ENCODE measurements at regions of chr5 and their contacts with region 1.

Region 1: DNA sequence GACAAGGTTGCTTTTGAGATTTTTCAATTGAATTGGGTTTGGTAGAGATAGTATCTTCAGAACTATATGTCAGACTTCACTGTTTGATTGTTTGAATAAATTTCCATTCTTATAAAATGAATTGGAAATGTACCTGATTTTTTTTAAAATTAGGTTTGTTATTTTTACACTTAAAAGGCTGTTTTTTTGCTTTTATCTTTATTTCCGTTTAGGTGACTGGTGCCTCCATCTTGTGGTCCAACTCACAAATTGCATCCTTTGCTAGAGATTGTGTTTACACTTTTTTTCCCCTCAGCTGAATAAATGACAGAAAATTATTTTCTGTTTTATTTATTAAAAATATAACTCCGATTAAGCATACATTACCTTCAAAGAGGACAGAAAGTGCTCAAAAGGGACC is 15.6 kb downstream of the NDUFAF2 start:
- DNase-seq: peak; percentile 64
- H3K4me3 ChIP-seq: no peak overlapping the region
- H3K27ac ChIP-seq: no peak overlapping the region
- H3K4me1 ChIP-seq: peaks cover 6% of the 10 kb centered on the region
- H3K27me3 ChIP-seq: no peaks in the 10 kb centered on the region

Region 2: DNA sequence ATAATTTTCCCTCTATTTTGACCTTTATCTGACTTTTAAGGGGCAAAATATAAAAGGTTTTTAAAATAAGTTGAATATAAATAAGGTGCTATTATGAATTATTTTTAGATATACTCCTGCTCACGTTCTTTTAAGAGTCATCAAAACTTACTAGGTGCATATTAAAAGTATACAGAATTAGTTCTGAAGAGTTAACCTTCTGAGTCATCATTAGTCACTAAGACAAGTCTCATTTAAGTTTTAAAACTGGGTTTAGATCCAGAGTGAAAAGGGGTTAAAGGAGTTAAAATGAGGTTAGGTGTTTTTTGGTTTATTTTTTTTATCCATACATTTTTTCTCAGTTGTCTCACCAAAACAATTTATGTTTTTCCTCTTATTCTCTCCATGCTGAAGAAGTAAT is 159.9 kb after region 1 on chr5:
- in situ Hi-C with region 1: no loop called
- DNase-seq: peak; percentile 36
- H3K4me3 ChIP-seq: no peak overlapping the region
- H3K27ac ChIP-seq: no peak overlapping the region
- H3K4me1 ChIP-seq: peaks cover 9% of the 10 kb centered on the region; the same call in 1 of the 2 replicates
- H3K27me3 ChIP-seq: no peaks in the 10 kb centered on the region

Region 3: GRCh38 chr5:61182449-61182848 is 221.9 kb after region 1 on chr5:
- in situ Hi-C with region 1: no loop called
- DNase-seq: no peak
- H3K4me3 ChIP-seq: no peak overlapping the region
- H3K27ac ChIP-seq: no peak overlapping the region
- H3K4me1 ChIP-seq: peaks cover 13% of the 10 kb centered on the region; the same call in 1 of the 2 replicates
- H3K27me3 ChIP-seq: no peaks in the 10 kb centered on the region

Region 4: GRCh38 chr5:61658592-61659008 is 698.0 kb after region 1 on chr5:
- in situ Hi-C with region 1: loop called (anchors 25 kb)
- DNase-seq: peak; percentile 77
- H3K4me3 ChIP-seq: no peak overlapping the region
- H3K27ac ChIP-seq: no peak overlapping the region
- H3K4me1 ChIP-seq: no peaks in the 10 kb centered on the region
- H3K27me3 ChIP-seq: peaks cover 12% of the 10 kb centered on the region; the same call in 1 of the 2 replicates

Region 5: GRCh38 chr5:61933787-61934626 is 973.4 kb after region 1 on chr5:
- in situ Hi-C with region 1: loop called (anchors 25 kb)
- DNase-seq: peak; percentile 59
- H3K4me3 ChIP-seq: no peak overlapping the region
- H3K27ac ChIP-seq: no peak overlapping the region
- H3K4me1 ChIP-seq: no peaks in the 10 kb centered on the region
- H3K27me3 ChIP-seq: no peaks in the 10 kb centered on the region; the same call in none of the 2 replicates

Region 6: GRCh38 chr5:62143268-62144229 is 1183.0 kb after region 1 on chr5:
- in situ Hi-C with region 1: loop called (anchors 25 kb)
- DNase-seq: peak; percentile 60
- H3K4me3 ChIP-seq: peak overlapping the region; percentile 38; the same call in 1 of the 2 replicates
- H3K27ac ChIP-seq: no peak overlapping the region
- H3K4me1 ChIP-seq: no peaks in the 10 kb centered on the region
- H3K27me3 ChIP-seq: peaks cover 20% of the 10 kb centered on the region